Mammary epithelial cell (primary cell): ENCODE measurements at regions of chr21 and their contacts with region 1.

Region 1: GRCh38 chr21:34148419-34148804 is 75.0 kb downstream of the MRPS6 start:
- DNase-seq: no peak
- H3K4me3 ChIP-seq: no peak overlapping the region
- H3K27ac ChIP-seq: peak overlapping the region; percentile 25
- H3K4me1 ChIP-seq: peaks cover 6% of the 10 kb centered on the region
- H3K27me3 ChIP-seq: no peaks in the 10 kb centered on the region
- CTCF ChIP-seq: no peak

Region 2: GRCh38 chr21:34113842-34114241 is 34.6 kb before region 1 on chr21:
- CTCF ChIA-PET with region 1: no interaction called
- dilution Hi-C with region 1: loop called (anchors 5 kb)
- in situ Hi-C with region 1: no loop called
- intact Hi-C with region 1: no loop called
- DNase-seq: no peak
- H3K4me3 ChIP-seq: no peak overlapping the region
- H3K27ac ChIP-seq: no peak overlapping the region
- H3K4me1 ChIP-seq: no peaks in the 10 kb centered on the region
- H3K27me3 ChIP-seq: no peaks in the 10 kb centered on the region
- CTCF ChIP-seq: no peak

Region 3: GRCh38 chr21:34215911-34216717 is 67.7 kb after region 1 on chr21:
- CTCF ChIA-PET with region 1: no interaction called
- dilution Hi-C with region 1: loop called (anchors 5 kb)
- in situ Hi-C with region 1: no loop called
- intact Hi-C with region 1: no loop called
- DNase-seq: no peak
- H3K4me3 ChIP-seq: no peak overlapping the region
- H3K27ac ChIP-seq: no peak overlapping the region
- H3K4me1 ChIP-seq: no peaks in the 10 kb centered on the region
- H3K27me3 ChIP-seq: no peaks in the 10 kb centered on the region
- CTCF ChIP-seq: no peak